ENCODE measurements at regions of chr12 and their contacts with region 1.

Region 1: DNA sequence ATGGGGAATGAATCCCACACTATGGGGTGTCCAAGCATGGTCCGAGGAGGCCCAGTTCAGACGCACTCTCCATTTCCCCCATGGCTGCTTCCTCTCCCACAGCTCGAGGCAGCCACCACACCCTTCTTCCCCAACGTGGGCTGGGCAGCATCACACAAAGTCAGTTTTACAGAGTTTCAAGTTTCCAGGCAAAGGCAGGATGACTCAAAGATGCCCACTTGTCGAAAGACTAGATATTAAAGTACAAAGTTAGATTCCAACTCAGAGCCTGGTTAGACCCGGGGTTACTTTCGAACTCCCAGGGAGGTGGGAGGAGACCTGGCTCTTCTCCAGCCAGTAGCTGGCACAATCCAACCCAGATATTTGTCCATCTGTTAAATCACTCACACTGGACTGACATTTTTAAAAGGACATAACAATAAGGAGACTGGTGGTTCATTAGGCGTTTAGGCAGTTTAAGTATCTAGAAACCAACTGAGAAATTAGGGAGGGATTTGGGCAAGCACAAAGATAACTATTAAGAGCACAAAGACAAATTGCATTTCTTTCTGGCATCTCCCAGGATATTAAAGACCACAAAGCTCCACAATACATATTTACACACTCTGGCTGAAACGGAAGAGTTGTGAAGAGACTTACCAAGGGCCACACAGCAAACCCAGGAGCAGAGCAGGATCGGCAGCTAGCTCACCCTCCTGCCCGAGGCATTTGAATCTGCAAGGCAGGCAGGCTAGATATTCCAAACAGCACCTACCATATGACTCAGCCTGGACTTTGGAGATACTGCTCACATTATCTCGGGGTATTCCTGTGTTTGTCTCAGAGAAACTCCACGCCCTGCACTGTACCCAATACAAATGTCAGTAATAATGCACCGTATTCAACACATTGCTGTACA is 34.8 kb downstream of the TMCC3 start:
- DNase-seq: peak; percentile 61 to 85
- ATAC-seq: peak; percentile 53 to 76
- H3K4me3 ChIP-seq: peak overlapping the region; percentile 14 to 49 (median 33)
- H3K27ac ChIP-seq: peak overlapping the region; percentile 83 to 88 (median 86)
- H3K4me1 ChIP-seq: peaks cover 63 to 68% of the 10 kb centered on the region in 2 donors
- H3K27me3 ChIP-seq: no peaks in the 10 kb centered on the region
- CTCF ChIP-seq: no peak
- POLR2A ChIP-seq: no peak

Region 2: DNA sequence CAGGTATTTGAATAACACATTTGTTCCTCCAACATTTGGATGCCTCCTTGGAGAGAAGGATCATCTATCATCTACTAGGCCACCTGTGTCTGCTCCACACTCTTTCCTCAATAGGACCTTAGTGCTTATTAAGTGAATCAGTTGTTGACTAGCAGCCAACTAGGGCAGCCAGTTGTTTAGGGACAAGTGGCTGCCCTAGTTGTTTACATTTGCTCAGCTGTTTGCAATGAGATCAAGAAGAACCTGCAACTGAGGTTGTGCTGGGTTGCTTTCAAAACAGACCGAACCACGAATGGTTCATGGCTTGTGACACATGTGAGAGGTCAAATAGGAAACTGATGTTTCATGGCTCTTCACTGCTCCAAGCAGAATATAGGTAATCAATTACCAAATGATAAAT is 18.9 kb before region 1 on chr12:
- in situ Hi-C with region 1: no loop called
- intact Hi-C with region 1: loop called (anchors 2 kb)
- DNase-seq: peak; percentile 38 to 88
- ATAC-seq: peak; percentile 72 to 94
- H3K4me3 ChIP-seq: no peak overlapping the region
- H3K27ac ChIP-seq: peak overlapping the region; percentile 35 to 78 (median 61)
- H3K4me1 ChIP-seq: peaks cover 65 to 69% of the 10 kb centered on the region in 2 donors
- H3K27me3 ChIP-seq: no peaks in the 10 kb centered on the region
- CTCF ChIP-seq: no peak
- POLR2A ChIP-seq: no peak

Region 3: DNA sequence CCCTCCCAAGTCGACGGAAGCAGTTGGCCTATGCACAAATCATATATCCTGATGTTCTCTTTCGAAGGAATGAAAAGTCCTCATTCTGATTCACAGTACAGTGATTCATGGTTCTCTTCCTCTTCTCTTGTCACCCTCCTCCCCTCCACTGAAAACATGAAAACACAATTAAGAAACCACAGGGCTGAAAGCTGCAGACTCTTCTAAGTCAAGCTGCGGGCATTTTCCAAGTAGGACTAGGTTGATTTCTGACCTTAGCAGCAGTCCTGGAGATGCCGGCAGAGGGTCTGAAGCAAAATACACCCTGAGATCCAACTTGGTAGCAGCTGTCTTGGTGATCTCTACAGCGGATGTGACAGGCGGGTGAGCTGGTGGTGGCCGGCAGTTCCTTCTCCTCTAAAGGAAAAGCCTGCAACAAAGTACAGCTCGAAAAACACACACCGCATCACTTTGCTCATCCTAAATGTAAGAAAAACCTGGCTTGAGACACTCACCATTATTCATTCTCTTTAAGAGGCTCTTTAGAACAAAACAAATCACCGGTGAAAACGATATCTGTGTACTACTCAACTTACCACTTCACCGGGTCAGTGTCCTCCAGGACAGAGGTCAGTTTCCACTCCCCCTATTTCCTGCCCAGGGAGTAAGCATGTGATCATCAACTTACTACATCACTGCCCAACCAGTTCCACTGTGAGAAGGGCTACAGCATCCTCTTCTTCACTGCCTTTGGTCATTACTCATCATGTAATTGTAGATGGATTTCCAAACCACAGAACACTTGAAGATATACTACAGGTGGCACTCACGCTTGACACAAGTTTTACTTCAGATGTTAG is 28.8 kb after region 1 on chr12:
- in situ Hi-C with region 1: no loop called
- intact Hi-C with region 1: loop called (anchors 1 kb)
- DNase-seq: peak; percentile 83 to 85
- ATAC-seq: peak; percentile 87 to 89
- H3K4me3 ChIP-seq: peak overlapping the region; percentile 13 to 34 (median 22)
- H3K27ac ChIP-seq: peak overlapping the region; percentile 87 to 98 (median 91)
- H3K4me1 ChIP-seq: peaks cover 69 to 80% of the 10 kb centered on the region in 2 donors
- H3K27me3 ChIP-seq: no peaks in the 10 kb centered on the region
- CTCF ChIP-seq: no peak
- POLR2A ChIP-seq: peak in 1 of 2 donors; percentile 42

Region 4: DNA sequence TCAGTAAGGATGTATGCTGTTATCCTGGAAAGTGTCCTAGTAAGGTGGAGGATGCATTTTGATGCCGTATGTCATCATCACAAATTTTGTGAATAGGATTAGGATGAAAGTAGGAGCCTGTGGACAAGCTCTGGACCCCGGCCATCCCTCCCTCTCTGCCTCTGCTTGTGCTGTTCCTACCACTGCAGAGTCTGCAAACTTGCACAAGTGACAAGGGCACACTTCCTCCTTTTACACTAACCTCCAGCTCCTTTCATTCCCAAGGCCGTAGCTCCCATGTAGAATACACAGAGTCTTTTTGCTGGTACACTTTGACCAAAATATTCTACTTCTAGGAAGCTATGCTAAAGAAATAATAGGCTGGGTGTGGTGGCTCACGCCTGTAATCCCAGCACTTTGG is 48.2 kb after region 1 on chr12:
- in situ Hi-C with region 1: no loop called
- intact Hi-C with region 1: no loop called
- DNase-seq: no peak
- ATAC-seq: no peak
- H3K4me3 ChIP-seq: no peak overlapping the region
- H3K27ac ChIP-seq: no peak overlapping the region
- H3K4me1 ChIP-seq: no peaks in the 10 kb centered on the region
- H3K27me3 ChIP-seq: no peaks in the 10 kb centered on the region
- CTCF ChIP-seq: no peak
- POLR2A ChIP-seq: no peak

Region 5: GRCh38 chr12:94779485-94779884 is 164.0 kb after region 1 on chr12:
- in situ Hi-C with region 1: no loop called
- intact Hi-C with region 1: no loop called
- DNase-seq: no peak
- ATAC-seq: no peak
- H3K4me3 ChIP-seq: no peak overlapping the region
- H3K27ac ChIP-seq: no peak overlapping the region
- H3K4me1 ChIP-seq: no peaks in the 10 kb centered on the region
- H3K27me3 ChIP-seq: no peaks in the 10 kb centered on the region
- CTCF ChIP-seq: no peak
- POLR2A ChIP-seq: no peak

Region 6: DNA sequence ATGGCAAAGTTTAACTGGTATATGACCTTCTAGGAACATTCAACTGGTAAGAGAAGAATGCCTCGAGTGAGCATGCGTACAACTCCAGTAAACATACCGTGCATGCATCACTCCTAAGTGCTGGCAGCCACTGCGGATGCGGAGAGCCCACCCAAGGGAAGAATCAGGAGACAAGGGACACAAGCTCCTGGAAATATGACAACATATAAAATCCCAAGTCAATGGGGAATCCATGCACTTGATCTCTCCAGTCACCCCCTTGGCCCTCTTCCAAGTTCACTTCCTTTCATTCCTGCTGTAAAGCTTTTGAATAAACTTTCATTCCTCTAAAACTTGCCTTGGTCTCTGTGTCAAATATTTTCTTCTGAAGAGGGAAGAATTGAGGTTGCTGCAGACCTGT is 203.5 kb after region 1 on chr12:
- in situ Hi-C with region 1: no loop called
- intact Hi-C with region 1: no loop called
- DNase-seq: no peak
- ATAC-seq: no peak
- H3K4me3 ChIP-seq: no peak overlapping the region
- H3K27ac ChIP-seq: no peak overlapping the region
- H3K4me1 ChIP-seq: no peaks in the 10 kb centered on the region
- H3K27me3 ChIP-seq: no peaks in the 10 kb centered on the region
- CTCF ChIP-seq: no peak
- POLR2A ChIP-seq: no peak